Heart left ventricle (tissue), 16 donors: ENCODE measurements at regions of chr16 and their contacts with region 1.

Region 1: GRCh38 chr16:56356276-56357240 is 68.8 kb downstream of the AMFR start:
- DNase-seq: peak; percentile 76 to 90 (median 84)
- ATAC-seq: peak; percentile 82 to 96 (median 94)
- H3K4me3 ChIP-seq: peak overlapping the region; percentile 3 to 56 (median 44)
- H3K27ac ChIP-seq: peak overlapping the region in 11 of 12 donors; percentile 6 to 74 (median 38)
- H3K4me1 ChIP-seq: peaks cover 0 to 14% (median 8%) of the 10 kb centered on the region in 12 donors
- H3K27me3 ChIP-seq: no peaks in the 10 kb centered on the region
- CTCF ChIP-seq: peak; percentile 76 to 96 (median 84)
- POLR2A ChIP-seq: no peak

Region 2: DNA sequence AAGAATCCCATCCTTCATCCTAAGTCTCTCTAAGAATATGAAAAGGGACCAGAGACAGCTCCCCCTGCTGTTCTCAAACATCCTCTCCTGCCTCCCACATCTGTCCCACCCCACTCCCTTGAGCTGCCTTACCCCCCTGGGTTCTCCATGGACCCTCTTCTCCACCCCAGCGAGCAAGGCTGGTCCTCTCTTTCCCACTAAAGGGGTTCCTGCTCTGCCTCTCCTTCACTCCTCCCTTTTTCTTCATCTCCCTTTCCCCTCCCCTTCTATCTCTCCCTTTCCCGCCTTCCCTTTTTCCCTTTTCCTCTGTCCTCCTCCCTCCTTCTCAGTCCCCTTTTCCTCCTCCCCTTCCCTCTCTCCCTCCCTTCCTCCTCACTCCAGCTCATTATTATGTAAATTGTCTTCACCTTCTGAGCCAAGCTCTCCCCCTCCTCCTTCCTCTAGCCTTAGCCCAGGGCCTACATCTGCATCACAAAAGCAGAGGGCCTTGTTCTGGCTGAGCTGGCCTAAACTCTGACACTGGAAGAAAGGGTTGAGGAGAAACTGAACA is 75.2 kb before region 1 on chr16:
- intact Hi-C with region 1: no loop called
- DNase-seq: no peak
- ATAC-seq: no peak
- H3K4me3 ChIP-seq: no peak overlapping the region
- H3K27ac ChIP-seq: no peak overlapping the region
- H3K4me1 ChIP-seq: peaks cover 0 to 10% (median 0%) of the 10 kb centered on the region in 12 donors
- H3K27me3 ChIP-seq: no peaks in the 10 kb centered on the region
- CTCF ChIP-seq: peak in 8 of 12 donors; percentile 12 to 41 (median 20)
- POLR2A ChIP-seq: no peak

Region 3: GRCh38 chr16:56332464-56333079 is 24.0 kb before region 1 on chr16:
- intact Hi-C with region 1: loop called in 1 of 10 experiments (anchors 1 kb)
- DNase-seq: peak; percentile 50 to 79 (median 71)
- ATAC-seq: peak; percentile 51 to 67 (median 58)
- H3K4me3 ChIP-seq: no peak overlapping the region
- H3K27ac ChIP-seq: no peak overlapping the region
- H3K4me1 ChIP-seq: peaks cover 0 to 21% (median 1%) of the 10 kb centered on the region in 12 donors
- H3K27me3 ChIP-seq: no peaks in the 10 kb centered on the region
- CTCF ChIP-seq: peak in 9 of 12 donors; percentile 6 to 54 (median 32)
- POLR2A ChIP-seq: no peak

Region 4: DNA sequence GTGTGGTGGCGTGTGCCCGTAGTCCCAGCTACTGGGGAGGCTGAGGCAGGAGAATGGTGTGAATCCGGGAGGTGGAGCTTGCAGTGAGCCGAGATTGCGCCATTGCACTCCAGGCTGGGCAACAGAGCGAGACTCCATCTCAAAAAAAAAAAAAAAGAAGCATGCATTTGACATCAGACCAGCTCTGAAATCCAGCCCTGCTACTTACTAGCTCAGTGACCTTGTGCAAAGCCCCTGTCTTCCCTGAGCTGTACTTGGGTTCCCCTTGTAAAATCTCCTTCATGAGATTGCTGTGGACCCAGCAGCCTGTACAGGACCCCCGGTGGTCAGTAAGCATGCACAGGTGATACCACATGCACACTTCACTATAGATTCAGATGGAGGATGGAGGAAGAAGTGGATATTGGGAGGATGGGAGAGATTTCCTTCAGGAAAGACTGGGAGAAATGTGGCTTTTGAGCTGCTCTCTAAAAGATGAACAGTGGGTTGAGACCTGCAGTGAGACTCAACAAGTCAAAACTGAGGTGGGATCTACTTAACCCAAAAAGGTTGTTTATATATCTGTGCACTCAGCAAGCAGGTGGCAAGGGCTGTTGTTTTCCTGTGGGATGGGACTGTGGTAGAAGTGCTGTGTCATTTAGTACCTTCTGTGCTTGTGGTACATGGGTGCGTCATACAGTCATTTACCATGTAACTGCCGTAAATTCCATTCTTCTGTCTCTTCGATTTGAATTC is 582.0 kb after region 1 on chr16:
- intact Hi-C with region 1: no loop called
- DNase-seq: no peak
- ATAC-seq: peak in 1 of 4 donors; percentile 19
- H3K4me3 ChIP-seq: no peak overlapping the region
- H3K27ac ChIP-seq: peak overlapping the region in 1 of 12 donors; percentile 45
- H3K4me1 ChIP-seq: peaks cover 0 to 64% (median 43%) of the 10 kb centered on the region in 12 donors
- H3K27me3 ChIP-seq: no peaks in the 10 kb centered on the region
- CTCF ChIP-seq: no peak
- POLR2A ChIP-seq: no peak